GM10248 (cell line): ENCODE measurements at regions of chr9 and their contacts with region 1.

Region 1: DNA sequence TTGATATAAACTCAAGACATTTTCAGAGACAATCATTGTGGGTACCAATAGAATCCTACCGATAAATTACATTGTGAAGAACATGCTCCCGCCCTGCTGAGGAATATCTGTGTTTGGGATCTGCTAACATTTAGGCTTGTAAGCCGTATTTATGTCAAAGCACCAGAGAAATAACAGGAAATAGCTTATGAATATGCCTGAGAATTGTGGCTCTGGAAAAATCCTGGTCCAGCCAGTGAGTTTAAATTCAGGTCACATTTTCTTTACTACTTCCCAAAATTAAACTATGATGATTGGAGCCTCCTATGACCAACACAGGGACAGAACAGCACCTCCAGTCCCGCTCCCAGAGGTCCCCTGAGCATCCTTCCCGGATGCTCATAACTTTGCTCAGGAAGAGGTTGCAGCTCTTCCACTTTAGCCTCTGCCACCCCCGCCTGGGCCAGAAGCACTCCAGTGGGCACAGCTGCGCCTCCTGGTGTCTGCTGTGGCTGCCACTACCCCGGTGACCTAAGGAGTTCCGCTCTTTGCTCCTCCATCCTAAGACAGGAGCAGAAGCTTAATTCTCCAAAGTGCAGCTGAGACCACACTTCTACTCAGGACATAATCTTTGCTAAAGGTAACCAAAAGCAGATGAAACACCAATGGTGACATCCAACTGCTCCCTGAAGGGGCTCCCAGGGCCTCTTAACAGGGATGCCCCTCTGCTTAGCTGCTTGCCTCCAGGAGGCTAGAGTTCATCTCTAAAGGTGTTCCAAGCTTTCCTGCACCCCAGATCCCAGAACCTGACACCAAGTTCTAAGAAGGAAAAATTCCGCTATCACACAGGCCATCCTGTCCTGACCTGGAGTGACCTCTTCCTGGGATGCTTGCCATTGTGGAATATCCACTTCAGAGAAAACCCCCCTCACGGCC is 58.8 kb downstream of the SLC1A1 start:
- DNase-seq: no peak
- CTCF ChIP-seq: peak; percentile 48

Region 2: DNA sequence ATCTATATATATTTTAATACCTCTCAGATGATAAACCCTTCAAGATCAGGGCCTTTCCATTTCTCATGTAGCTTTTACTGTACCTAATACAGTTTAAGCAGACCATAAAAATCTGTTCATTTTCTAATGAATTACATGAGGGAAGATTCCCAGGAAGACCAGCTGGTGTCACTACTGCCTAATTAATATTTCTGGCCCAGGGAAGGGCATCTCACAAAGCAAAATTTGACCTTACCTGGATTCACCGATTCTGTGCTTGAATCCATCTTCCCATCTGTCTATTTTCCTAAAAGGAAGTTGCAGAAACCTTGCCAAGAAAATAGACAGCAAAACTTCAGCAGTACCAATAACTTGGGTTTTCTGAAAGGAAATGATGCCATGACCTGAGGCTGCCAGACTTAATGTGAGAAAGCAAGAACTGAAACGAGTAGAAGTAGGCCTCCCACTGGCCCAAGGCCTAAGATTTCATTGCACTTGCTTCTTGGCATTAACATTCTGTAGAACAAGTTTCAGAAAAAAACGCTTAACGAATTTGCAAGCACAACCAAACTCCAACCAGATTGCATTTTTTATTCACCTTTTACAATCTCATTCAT is 166.2 kb before region 1 on chr9:
- CTCF ChIA-PET with region 1: interaction called, 13 read pairs
- POLR2A ChIA-PET with region 1: no interaction called
- DNase-seq: peak; percentile 25
- CTCF ChIP-seq: peak; percentile 50

Region 3: DNA sequence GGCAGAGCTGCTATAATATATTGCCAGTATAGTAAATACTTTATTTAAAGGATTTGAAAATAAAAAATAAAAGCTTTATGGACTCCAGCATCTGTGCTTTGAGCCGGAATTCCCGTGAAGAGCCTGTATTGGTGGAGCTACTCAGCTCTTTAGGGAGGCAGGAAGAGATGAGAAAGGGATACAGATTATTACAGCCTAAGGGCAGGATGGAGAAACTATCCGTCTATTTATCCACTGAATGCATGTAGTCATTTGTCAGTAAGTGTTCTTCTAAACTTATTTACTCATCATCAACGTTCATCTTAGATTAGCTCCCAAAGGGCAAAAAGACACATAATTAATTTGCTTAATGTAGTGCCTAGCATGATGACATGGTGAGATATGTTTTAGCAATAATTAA is 10.4 kb before region 1 on chr9:
- CTCF ChIA-PET with region 1: interaction called, 42 read pairs
- POLR2A ChIA-PET with region 1: no interaction called
- DNase-seq: no peak
- CTCF ChIP-seq: no peak

Region 4: DNA sequence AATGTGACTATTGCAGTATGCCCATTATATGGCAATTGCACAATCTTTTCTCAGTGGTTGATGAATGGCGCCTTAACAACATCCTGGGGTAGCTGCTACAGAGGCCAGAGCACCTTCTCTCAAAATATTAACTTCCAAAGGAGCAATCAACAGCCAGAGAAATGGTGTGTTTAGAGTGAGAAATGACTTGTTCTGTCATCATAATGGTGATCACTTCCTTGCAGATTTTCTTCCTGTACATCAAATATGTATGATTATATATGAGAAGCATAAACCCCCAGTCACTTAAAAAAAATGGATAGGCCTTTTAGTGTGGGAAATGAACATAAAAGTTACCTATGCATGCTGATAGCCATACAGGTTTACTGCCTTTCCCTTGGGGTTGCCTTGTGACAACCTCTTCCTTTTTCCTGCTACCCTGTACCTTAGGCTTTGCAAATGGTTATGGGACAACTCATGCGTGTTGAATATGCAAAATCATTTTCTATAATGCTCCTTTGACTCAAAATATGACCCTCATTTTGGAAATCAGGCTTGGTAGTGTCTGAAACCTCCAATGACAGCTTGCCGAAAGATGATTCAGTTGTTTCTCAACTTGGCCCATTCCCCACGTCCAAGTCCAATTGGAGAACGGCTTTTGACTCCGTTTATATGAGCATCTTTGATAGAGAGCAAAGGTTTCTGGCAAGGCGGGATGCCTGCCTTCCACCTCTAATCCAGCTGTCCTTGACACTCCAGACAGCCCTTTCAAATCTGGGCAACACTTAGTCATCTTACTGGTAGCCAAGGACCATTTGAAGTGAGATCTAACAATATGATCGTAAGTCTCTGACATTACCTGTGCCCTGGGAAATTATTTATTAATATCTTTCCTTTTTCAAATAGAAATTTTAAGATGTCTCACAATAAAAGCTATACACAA is 10.5 kb after region 1 on chr9:
- CTCF ChIA-PET with region 1: interaction called, 32 read pairs
- POLR2A ChIA-PET with region 1: no interaction called
- DNase-seq: no peak
- CTCF ChIP-seq: no peak